GM12878 (cell line): ENCODE measurements at regions of chr14 and their contacts with region 1.

Region 1: DNA sequence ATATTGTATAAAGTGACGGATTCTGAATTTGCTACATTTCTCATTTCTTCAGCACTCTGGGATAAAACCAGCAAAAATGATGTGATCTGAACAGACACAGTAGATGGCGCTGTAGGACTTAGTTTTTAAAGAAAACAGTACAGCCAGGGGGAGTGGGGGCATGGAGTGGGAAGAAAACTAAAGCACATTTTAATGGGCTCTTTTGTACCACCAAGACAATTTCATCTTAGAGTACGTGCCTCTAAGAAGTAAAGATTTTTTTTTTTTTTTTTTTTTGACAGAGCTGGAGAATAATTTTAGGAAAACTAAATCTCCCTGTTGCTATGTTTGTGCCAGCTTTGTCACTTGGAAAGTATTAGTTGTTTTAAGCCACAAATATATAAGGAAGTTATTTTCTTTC is 124.4 kb downstream of the RAD51B start:
- DNase-seq: peak; percentile 49
- ATAC-seq: peak; percentile 89
- H3K4me3 ChIP-seq: no peak overlapping the region
- H3K27ac ChIP-seq: no peak overlapping the region
- H3K4me1 ChIP-seq: no peaks in the 10 kb centered on the region
- H3K27me3 ChIP-seq: no peaks in the 10 kb centered on the region
- CTCF ChIP-seq: peak; percentile 50 to 78 (median 68); a peak in 5 of 6 replicates
- EP300 ChIP-seq: no peak
- POLR2A ChIP-seq: no peak
- RAD21 ChIP-seq: peak; percentile 94

Region 2: DNA sequence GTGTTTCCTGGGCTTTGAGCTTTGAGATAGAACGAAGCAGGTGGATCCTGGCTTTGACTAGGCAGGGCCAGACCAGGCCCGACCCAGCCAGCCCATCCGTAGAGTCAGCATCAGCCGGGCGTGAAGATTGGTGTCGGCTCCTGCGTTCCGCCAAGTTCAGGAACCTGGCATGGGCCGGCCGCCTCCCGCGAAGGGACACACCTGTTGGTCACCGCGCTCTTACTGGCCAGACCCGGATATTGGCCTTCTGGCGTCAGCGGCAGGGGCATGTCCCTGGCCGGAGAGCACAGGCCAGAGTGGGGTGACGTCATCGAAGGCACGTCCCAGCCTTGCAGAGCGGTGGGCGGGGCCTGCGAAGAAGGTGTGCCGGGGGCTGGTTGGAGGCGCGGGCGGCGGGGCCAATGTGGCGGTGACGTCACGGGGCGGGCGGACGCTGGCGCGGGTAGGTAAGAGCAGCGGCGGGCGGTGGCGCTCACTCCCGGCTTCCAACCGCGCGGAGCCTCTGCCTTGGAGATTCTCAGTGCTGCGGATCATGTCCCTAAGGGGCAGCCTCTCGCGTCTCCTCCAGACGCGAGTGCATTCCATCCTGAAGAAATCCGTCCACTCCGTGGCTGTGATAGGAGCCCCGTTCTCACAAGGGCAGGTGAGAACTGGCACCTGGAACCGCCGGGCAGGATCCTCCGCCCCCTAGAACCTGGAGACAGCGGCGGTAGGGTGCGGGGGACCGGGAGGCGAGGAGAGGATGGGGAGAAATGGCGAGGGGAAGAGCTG is 324.3 kb before region 1 on chr14 and contains the start of gene ARG2:
- CTCF ChIA-PET with region 1: no interaction called
- POLR2A ChIA-PET with region 1: no interaction called
- RAD21 ChIA-PET with region 1: no interaction called
- SMC1A ChIA-PET with region 1: no interaction called
- in situ Hi-C with region 1: no loop called
- intact Hi-C with region 1: no loop called
- DNase-seq: peak; percentile 65
- ATAC-seq: peak; percentile 97
- H3K4me3 ChIP-seq: peak within 1 kb of the TSS; percentile 82
- H3K27ac ChIP-seq: no peak within 1 kb of the TSS
- H3K4me1 ChIP-seq: peaks cover 5% of the 10 kb centered on the region; the same call in 1 of the 2 replicates
- H3K27me3 ChIP-seq: no peaks in the 10 kb centered on the region
- CTCF ChIP-seq: peak in 1 of 3 experiments; percentile 32; a peak in 1 of 6 replicates
- EP300 ChIP-seq: no peak
- POLR2A ChIP-seq: peak; percentile 56
- RAD21 ChIP-seq: no peak
- polyA plus RNA-seq, gene ARG2: 2.1 to 3.2 TPM

Region 3: GRCh38 chr14:67883717-67884116 is 60.2 kb before region 1 on chr14:
- CTCF ChIA-PET with region 1: interaction called, 9 read pairs
- POLR2A ChIA-PET with region 1: no interaction called
- RAD21 ChIA-PET with region 1: interaction called, 4 read pairs
- SMC1A ChIA-PET with region 1: interaction called, 10 read pairs
- in situ Hi-C with region 1: no loop called
- intact Hi-C with region 1: no loop called
- DNase-seq: no peak
- ATAC-seq: no peak
- H3K4me3 ChIP-seq: no peak overlapping the region
- H3K27ac ChIP-seq: no peak overlapping the region
- H3K4me1 ChIP-seq: peaks cover 17% of the 10 kb centered on the region
- H3K27me3 ChIP-seq: no peaks in the 10 kb centered on the region
- CTCF ChIP-seq: peak in 1 of 3 experiments; percentile 7; a peak in 1 of 6 replicates
- EP300 ChIP-seq: no peak
- POLR2A ChIP-seq: no peak
- RAD21 ChIP-seq: no peak

Region 4: GRCh38 chr14:68255697-68256203 is 311.8 kb after region 1 on chr14:
- CTCF ChIA-PET with region 1: interaction called, 110 read pairs
- POLR2A ChIA-PET with region 1: interaction called, 4 read pairs
- RAD21 ChIA-PET with region 1: interaction called, 93 read pairs
- SMC1A ChIA-PET with region 1: interaction called, 90 read pairs
- in situ Hi-C with region 1: no loop called
- intact Hi-C with region 1: no loop called
- DNase-seq: no peak
- ATAC-seq: no peak
- H3K4me3 ChIP-seq: no peak overlapping the region
- H3K27ac ChIP-seq: no peak overlapping the region
- H3K4me1 ChIP-seq: peaks cover 24% of the 10 kb centered on the region
- H3K27me3 ChIP-seq: no peaks in the 10 kb centered on the region
- CTCF ChIP-seq: no peak
- EP300 ChIP-seq: no peak
- POLR2A ChIP-seq: no peak
- RAD21 ChIP-seq: no peak

Region 5: GRCh38 chr14:68408680-68409079 is 464.7 kb after region 1 on chr14:
- CTCF ChIA-PET with region 1: interaction called, 8 read pairs
- POLR2A ChIA-PET with region 1: no interaction called
- RAD21 ChIA-PET with region 1: interaction called, 6 read pairs
- SMC1A ChIA-PET with region 1: interaction called, 6 read pairs
- in situ Hi-C with region 1: no loop called
- intact Hi-C with region 1: loop called (anchors 10 kb)
- DNase-seq: no peak
- ATAC-seq: peak; percentile 42
- H3K4me3 ChIP-seq: no peak overlapping the region
- H3K27ac ChIP-seq: no peak overlapping the region
- H3K4me1 ChIP-seq: peaks cover 39% of the 10 kb centered on the region
- H3K27me3 ChIP-seq: no peaks in the 10 kb centered on the region
- CTCF ChIP-seq: peak; percentile 25 to 54 (median 33); a peak in 5 of 6 replicates
- EP300 ChIP-seq: no peak
- POLR2A ChIP-seq: no peak
- RAD21 ChIP-seq: peak; percentile 67

Region 6: GRCh38 chr14:68795597-68796417 is 851.9 kb after region 1 on chr14:
- CTCF ChIA-PET with region 1: interaction called, 15 read pairs
- POLR2A ChIA-PET with region 1: no interaction called
- RAD21 ChIA-PET with region 1: interaction called, 11 read pairs
- SMC1A ChIA-PET with region 1: interaction called, 3 read pairs
- in situ Hi-C with region 1: no loop called
- intact Hi-C with region 1: no loop called
- DNase-seq: no peak
- ATAC-seq: peak; percentile 62
- H3K4me3 ChIP-seq: peak overlapping the region; percentile 97
- H3K27ac ChIP-seq: peak overlapping the region; percentile 100
- H3K4me1 ChIP-seq: peaks cover 18% of the 10 kb centered on the region
- H3K27me3 ChIP-seq: no peaks in the 10 kb centered on the region
- CTCF ChIP-seq: peak; percentile 46 to 74 (median 59); a peak in 5 of 6 replicates
- EP300 ChIP-seq: peak in 1 of 2 experiments; percentile 62; a peak in 3 of 4 replicates
- POLR2A ChIP-seq: peak; percentile 97
- RAD21 ChIP-seq: peak; percentile 43; the same call in 1 of the 2 replicates

Region 7: DNA sequence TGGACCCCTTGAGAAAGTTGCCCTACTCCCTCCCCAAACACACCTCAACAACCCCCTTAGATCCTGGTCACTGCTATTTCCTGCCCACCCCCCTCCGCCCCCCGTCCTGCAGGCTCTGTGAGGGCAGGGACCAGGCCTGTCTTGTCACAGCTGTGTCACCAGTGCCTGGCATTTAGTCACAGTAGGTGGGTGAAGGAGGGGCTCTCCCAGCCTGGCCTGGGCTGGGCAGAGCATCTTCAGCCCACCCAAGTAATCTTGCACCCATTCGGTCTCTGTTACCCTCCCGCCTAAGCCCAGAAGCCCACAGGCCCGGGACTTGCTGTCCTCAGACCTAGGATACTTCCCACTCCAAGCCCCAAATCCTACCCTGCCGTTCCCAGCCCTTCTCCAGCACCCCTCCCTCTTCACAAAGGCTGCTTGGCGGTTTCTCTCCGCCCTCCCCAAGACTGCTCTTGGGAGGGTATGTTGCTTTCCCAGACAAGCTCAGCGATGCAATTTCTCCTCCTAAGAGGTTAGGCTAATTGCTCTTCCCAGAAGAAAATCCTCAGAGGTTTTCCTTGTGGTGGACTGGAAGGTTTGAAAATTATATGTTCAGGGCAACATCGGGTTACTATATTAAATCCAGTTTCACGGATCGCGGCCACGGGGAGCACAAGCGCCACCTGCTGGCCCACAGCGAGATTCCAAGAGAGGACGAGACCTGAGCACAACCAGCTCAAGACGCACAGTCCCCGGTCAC is 899.7 kb after region 1 on chr14:
- CTCF ChIA-PET with region 1: interaction called, 45 read pairs
- POLR2A ChIA-PET with region 1: interaction called, 3 read pairs
- RAD21 ChIA-PET with region 1: interaction called, 10 read pairs
- SMC1A ChIA-PET with region 1: interaction called, 13 read pairs
- in situ Hi-C with region 1: no loop called
- intact Hi-C with region 1: no loop called
- DNase-seq: no peak
- ATAC-seq: peak; percentile 91
- H3K4me3 ChIP-seq: peak overlapping the region; percentile 25; the same call in 1 of the 2 replicates
- H3K27ac ChIP-seq: no peak overlapping the region
- H3K4me1 ChIP-seq: peaks cover 10% of the 10 kb centered on the region; the same call in 1 of the 2 replicates
- H3K27me3 ChIP-seq: no peaks in the 10 kb centered on the region
- CTCF ChIP-seq: peak; percentile 90 to 91 (median 90)
- EP300 ChIP-seq: no peak
- POLR2A ChIP-seq: no peak
- RAD21 ChIP-seq: peak; percentile 74